Right ventricle myocardium inferior (tissue), 1 donor: ENCODE measurements at regions of chr2 and their contacts with region 1.

Region 1: DNA sequence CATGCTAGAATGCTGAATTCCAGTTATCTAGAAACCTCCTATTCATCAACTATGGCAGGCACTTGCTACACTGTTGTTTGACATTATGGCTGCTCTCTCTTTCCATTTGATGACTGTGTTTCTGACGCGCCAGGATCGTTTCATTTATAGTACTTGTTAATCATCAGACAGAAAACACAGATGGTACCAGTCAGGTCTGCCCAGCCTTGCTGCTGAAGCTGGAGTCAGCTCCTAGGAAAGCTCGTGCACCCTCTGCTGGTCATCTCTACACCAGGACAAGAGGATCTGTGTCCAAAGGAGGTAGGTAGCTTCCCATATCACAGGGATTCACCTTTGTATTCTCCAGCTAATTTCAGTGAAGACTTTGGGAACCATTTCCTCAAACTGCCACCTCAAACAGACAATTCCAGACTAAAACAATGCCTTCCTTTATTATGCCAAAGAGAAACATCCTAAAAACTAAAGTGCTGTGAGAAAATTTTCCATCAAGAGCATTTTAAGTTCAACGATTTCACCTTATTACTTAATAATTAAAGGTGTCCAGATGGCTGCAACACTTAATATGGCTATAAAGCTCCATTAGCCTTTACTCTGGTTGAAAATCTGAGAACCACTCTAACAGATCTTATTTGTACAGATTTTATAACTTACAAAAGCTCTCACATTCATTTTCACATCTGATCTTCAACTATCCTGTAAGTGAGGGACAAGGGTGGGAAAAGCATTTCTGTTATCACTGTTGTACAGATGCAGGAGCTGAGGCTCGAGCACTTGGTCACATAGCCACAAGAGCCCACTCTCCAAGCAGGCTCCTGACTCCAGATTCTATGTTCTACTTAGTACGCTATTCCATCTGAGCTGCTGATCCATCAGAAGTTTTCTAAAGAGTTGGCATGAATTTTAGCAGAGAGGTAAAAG is 17.5 kb downstream of the METTL8 start:
- DNase-seq: peak; percentile 81
- ATAC-seq: peak; percentile 98

Region 2: GRCh38 chr2:170973492-170974303 is 442.6 kb before region 1 on chr2:
- intact Hi-C with region 1: loop called (anchors 1 kb)
- DNase-seq: peak; percentile 91
- ATAC-seq: peak; percentile 96

Region 3: DNA sequence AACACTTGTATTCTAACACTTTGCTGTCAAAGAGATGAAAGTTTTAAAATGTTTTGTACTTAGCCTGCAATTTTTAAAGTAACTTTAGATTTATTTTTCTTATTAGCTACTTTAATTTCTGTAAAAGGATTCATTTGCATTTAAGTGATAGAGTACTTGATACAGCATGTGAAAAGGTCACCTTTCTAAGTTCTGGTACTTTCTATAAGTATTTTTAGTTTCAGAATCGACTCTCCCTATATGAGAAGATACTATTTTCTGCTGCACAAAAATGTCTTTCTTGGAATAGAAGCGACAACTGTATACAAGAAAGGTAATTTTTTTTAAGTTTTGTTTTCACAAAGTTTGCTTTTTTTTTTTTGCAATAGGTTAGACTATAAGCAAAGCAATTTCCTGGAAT is 55.4 kb before region 1 on chr2:
- intact Hi-C with region 1: no loop called
- DNase-seq: no peak
- ATAC-seq: no peak

Region 4: GRCh38 chr2:172013396-172013795 is 597.1 kb after region 1 on chr2:
- intact Hi-C with region 1: no loop called
- DNase-seq: no peak
- ATAC-seq: no peak